Pancreas (tissue), 10 donors: ENCODE measurements at regions of chr10 and their contacts with region 1.

Region 1: DNA sequence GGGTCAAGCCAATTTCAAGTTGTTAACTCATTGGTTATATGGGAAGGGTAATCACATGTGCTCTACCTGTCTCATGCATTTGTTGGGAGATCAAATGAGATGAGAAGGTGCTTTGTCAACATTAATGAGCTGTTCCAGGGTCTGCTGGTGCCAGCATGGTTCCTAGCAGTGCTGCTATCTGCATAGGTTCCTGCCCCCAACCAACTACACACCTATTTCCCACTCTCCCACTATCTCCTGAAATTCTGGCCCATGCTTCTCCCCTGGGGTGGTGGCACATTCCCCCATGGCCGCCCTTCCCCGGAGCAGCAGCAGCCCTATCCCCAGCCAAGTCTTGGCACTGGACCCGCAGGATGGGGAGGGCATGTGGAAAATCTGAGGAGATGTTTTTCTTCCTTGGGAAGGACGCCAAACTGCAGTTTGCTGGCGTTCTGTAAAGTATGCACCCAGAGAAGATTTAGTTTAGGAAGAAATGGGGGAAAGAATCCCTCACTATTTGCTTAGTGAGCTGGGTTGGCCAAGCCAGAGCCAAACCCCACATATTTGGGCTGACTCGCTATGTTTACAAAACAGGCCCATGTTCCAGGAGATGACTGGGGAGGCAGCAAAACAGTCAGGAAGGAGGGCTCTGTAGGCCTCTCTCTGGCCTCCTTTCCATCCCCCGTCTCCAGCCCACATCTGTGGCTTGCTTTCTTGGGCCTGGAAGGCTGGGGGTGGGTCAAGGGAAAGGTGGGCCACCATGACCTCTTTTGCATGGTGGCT is 42.5 kb downstream of the PPP1R3C start:
- DNase-seq: peak in 5 of 6 donors; percentile 37 to 75 (median 66)
- ATAC-seq: peak; percentile 25 to 42 (median 36)
- H3K4me3 ChIP-seq: no peak overlapping the region
- H3K27ac ChIP-seq: peak overlapping the region; percentile 56 to 88 (median 80)
- H3K4me1 ChIP-seq: peaks cover 56 to 70% (median 69%) of the 10 kb centered on the region in 3 donors
- H3K27me3 ChIP-seq: no peaks in the 10 kb centered on the region
- CTCF ChIP-seq: no peak

Region 2: GRCh38 chr10:91287276-91287675 is 303.0 kb before region 1 on chr10:
- intact Hi-C with region 1: no loop called
- DNase-seq: no peak
- ATAC-seq: peak; percentile 17 to 54 (median 45)
- H3K4me3 ChIP-seq: no peak overlapping the region
- H3K27ac ChIP-seq: no peak overlapping the region
- H3K4me1 ChIP-seq: no peaks in the 10 kb centered on the region
- H3K27me3 ChIP-seq: no peaks in the 10 kb centered on the region
- CTCF ChIP-seq: no peak

Region 3: GRCh38 chr10:91556691-91557566 is 33.4 kb before region 1 on chr10:
- intact Hi-C with region 1: loop called in 1 of 3 experiments (anchors 5 kb)
- DNase-seq: peak in 3 of 6 donors; percentile 69 to 76 (median 73)
- ATAC-seq: peak; percentile 85 to 91 (median 86)
- H3K4me3 ChIP-seq: no peak overlapping the region
- H3K27ac ChIP-seq: peak overlapping the region; percentile 39 to 86 (median 68)
- H3K4me1 ChIP-seq: peaks cover 14 to 35% (median 27%) of the 10 kb centered on the region in 3 donors
- H3K27me3 ChIP-seq: no peaks in the 10 kb centered on the region
- CTCF ChIP-seq: no peak